MCF 10A (cell line): ENCODE measurements at regions of chr20 and their contacts with region 1.

Region 1: GRCh38 chr20:46689082-46689754 is at the start of gene TP53RK:
- DNase-seq: peak; percentile 99
- H3K4me3 Mint-ChIP-seq: peak within 1 kb of the TSS; percentile 88
- H3K27ac Mint-ChIP-seq: peak within 1 kb of the TSS; percentile 92
- H3K4me1 Mint-ChIP-seq: peaks cover 29% of the 10 kb centered on the region
- H3K27me3 Mint-ChIP-seq: no peaks in the 10 kb centered on the region
- CTCF ChIP-seq: peak; percentile 31
- total RNA-seq, gene TP53RK: 11.0 and 16.2 TPM in 2 replicates

Region 2: GRCh38 chr20:46488451-46488850 is 200.8 kb before region 1 on chr20:
- CTCF ChIA-PET with region 1: no interaction called
- POLR2A ChIA-PET with region 1: no interaction called
- intact Hi-C with region 1: no loop called
- DNase-seq: no peak
- H3K4me3 Mint-ChIP-seq: no peak overlapping the region
- H3K27ac Mint-ChIP-seq: no peak overlapping the region
- H3K4me1 Mint-ChIP-seq: no peaks in the 10 kb centered on the region
- H3K27me3 Mint-ChIP-seq: peaks cover 97% of the 10 kb centered on the region
- CTCF ChIP-seq: no peak

Region 3: GRCh38 chr20:46562373-46563169 is 126.6 kb before region 1 on chr20:
- CTCF ChIA-PET with region 1: interaction called, 3 read pairs
- POLR2A ChIA-PET with region 1: interaction called, 19 read pairs
- intact Hi-C with region 1: loop called (anchors 5 kb)
- DNase-seq: peak; percentile 66
- H3K4me3 Mint-ChIP-seq: no peak overlapping the region
- H3K27ac Mint-ChIP-seq: no peak overlapping the region
- H3K4me1 Mint-ChIP-seq: peaks cover 11% of the 10 kb centered on the region
- H3K27me3 Mint-ChIP-seq: no peaks in the 10 kb centered on the region
- CTCF ChIP-seq: peak; percentile 66

Region 4: GRCh38 chr20:46699651-46700359 is 10.6 kb after region 1 on chr20:
- CTCF ChIA-PET with region 1: interaction called, 3 read pairs
- POLR2A ChIA-PET with region 1: interaction called, 23 read pairs
- intact Hi-C with region 1: no loop called
- DNase-seq: peak; percentile 54
- H3K4me3 Mint-ChIP-seq: no peak overlapping the region
- H3K27ac Mint-ChIP-seq: no peak overlapping the region
- H3K4me1 Mint-ChIP-seq: peaks cover 8% of the 10 kb centered on the region
- H3K27me3 Mint-ChIP-seq: no peaks in the 10 kb centered on the region
- CTCF ChIP-seq: peak; percentile 72

Region 5: DNA sequence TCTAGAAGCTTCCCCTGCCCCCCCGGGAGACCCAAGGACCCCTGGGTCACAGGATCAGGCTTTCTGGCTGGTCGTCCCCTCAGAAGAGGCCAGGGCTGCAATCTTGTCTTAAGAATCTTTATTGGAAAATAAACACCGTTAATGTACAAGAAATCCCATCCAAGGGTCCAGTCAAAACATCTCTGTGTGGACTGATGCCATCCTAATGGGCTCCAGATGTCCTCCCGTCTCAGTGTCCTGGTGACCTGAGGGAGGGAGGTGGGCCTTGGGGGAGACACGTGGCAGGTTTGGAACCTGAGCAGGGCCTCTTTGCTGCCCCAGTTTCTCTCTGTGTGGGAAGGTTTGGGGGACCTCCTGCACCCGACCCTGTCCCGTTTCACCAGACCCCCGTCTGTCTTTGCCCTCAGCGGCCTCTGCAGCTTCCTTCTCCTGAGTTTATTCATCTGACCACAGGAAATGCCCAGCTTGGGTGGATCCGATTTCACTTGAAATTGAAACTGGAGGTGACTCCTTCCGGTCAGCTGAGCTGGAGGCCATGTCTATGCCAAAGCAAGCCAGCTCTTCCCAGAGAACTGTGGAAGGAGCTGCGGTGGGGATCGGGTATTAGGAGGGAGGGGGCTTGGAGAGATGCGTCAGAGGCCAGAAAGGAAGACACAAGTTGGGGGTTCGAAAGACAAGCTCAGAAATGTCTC is 95.4 kb after region 1 on chr20:
- CTCF ChIA-PET with region 1: no interaction called
- POLR2A ChIA-PET with region 1: no interaction called
- intact Hi-C with region 1: no loop called
- DNase-seq: no peak
- H3K4me3 Mint-ChIP-seq: no peak overlapping the region
- H3K27ac Mint-ChIP-seq: no peak overlapping the region
- H3K4me1 Mint-ChIP-seq: no peaks in the 10 kb centered on the region
- H3K27me3 Mint-ChIP-seq: peaks cover 8% of the 10 kb centered on the region
- CTCF ChIP-seq: no peak

Region 6: GRCh38 chr20:46857061-46857831 is 168.0 kb after region 1 on chr20:
- CTCF ChIA-PET with region 1: no interaction called
- POLR2A ChIA-PET with region 1: no interaction called
- intact Hi-C with region 1: no loop called
- DNase-seq: no peak
- H3K4me3 Mint-ChIP-seq: no peak overlapping the region
- H3K27ac Mint-ChIP-seq: no peak overlapping the region
- H3K4me1 Mint-ChIP-seq: no peaks in the 10 kb centered on the region
- H3K27me3 Mint-ChIP-seq: peaks cover 33% of the 10 kb centered on the region
- CTCF ChIP-seq: no peak

Region 7: DNA sequence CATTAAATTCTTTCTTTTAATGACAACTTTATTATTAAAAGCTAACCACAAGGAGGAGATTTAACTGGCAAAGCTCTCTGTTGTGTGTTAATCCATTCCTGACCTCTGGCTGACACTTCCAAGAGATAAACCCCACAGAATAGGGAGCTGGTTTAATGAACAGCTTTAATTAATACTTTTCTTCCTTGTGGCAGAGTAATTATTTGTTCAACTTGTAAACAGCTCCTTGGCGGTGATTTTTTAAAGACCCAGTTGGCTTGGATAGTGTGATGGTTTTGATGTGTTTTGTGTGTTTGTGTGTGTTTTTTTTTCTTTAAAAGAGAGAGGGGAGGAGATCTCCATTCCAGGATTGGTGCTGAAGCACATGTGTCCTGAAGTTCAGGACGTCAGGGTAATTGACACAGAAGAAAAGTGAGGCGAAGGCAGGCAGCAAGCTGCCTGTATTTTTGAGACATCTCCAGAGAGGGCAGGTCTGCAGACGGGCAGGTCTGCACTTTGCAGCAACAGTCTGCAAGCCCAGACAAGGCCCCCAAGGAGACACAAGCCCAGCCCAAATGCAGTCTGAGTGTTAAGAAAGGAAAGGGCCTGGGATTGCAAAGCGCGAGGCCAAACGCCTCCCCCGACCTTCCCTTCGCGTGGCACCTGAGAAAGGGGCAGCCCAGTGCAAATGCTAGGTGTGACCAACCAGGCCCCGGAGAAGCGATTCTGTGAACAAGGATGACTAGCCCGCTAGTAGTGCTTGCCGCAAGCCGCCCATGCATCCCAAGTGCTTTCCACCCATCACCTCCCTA is 436.6 kb after region 1 on chr20:
- CTCF ChIA-PET with region 1: interaction called, 3 read pairs
- POLR2A ChIA-PET with region 1: interaction called, 11 read pairs
- intact Hi-C with region 1: no loop called
- DNase-seq: peak; percentile 90
- H3K4me3 Mint-ChIP-seq: peak overlapping the region; percentile 20
- H3K27ac Mint-ChIP-seq: peak overlapping the region; percentile 83
- H3K4me1 Mint-ChIP-seq: peaks cover 25% of the 10 kb centered on the region
- H3K27me3 Mint-ChIP-seq: no peaks in the 10 kb centered on the region
- CTCF ChIP-seq: no peak